Esophagus muscularis mucosa (tissue), 4 donors: ENCODE measurements at regions of chr17 and their contacts with region 1.

Region 1: DNA sequence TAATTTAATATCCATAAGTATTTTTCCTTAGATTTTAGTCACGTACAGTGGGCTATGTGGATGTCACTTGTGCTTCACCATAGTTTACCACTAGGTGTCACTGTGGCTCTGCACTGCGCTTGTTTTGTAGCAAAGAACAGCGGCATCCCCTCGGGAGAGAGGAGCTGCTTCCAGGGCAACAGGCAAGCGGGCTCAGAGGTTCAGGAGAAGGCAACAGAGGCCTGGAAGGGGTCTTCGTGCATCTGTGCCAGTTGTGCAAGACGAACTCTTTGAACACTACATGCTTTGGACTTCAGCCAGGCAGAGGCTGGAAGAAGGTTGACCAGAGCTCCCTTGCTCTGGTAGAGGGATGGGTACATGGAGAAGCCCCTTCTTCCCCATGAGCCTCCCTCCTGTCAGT is 20.6 kb downstream of the CYB561 start:
- DNase-seq: no peak
- H3K4me3 ChIP-seq: no peak overlapping the region
- H3K27ac ChIP-seq: no peak overlapping the region
- H3K4me1 ChIP-seq: peaks cover 0 to 12% (median 7%) of the 10 kb centered on the region in 4 donors
- H3K27me3 ChIP-seq: no peaks in the 10 kb centered on the region
- CTCF ChIP-seq: peak; percentile 92 to 95 (median 94)
- EP300 ChIP-seq: no peak
- POLR2A ChIP-seq: no peak

Region 2: GRCh38 chr17:63171428-63172393 is 253.8 kb before region 1 on chr17:
- intact Hi-C with region 1: no loop called
- DNase-seq: no peak
- H3K4me3 ChIP-seq: no peak overlapping the region
- H3K27ac ChIP-seq: no peak overlapping the region
- H3K4me1 ChIP-seq: peaks cover 0 to 12% (median 9%) of the 10 kb centered on the region in 4 donors
- H3K27me3 ChIP-seq: no peaks in the 10 kb centered on the region
- CTCF ChIP-seq: no peak
- EP300 ChIP-seq: no peak
- POLR2A ChIP-seq: no peak

Region 3: GRCh38 chr17:63613663-63614062 is 188.2 kb after region 1 on chr17:
- intact Hi-C with region 1: loop called (anchors 2 kb)
- DNase-seq: no peak
- H3K4me3 ChIP-seq: no peak overlapping the region
- H3K27ac ChIP-seq: no peak overlapping the region
- H3K4me1 ChIP-seq: peaks cover 0 to 6% (median 0%) of the 10 kb centered on the region in 4 donors
- H3K27me3 ChIP-seq: no peaks in the 10 kb centered on the region
- CTCF ChIP-seq: no peak
- EP300 ChIP-seq: no peak
- POLR2A ChIP-seq: no peak